Left ventricle myocardium inferior (tissue), 1 donor: ENCODE measurements at regions of chr1 and their contacts with region 1.

Region 1: DNA sequence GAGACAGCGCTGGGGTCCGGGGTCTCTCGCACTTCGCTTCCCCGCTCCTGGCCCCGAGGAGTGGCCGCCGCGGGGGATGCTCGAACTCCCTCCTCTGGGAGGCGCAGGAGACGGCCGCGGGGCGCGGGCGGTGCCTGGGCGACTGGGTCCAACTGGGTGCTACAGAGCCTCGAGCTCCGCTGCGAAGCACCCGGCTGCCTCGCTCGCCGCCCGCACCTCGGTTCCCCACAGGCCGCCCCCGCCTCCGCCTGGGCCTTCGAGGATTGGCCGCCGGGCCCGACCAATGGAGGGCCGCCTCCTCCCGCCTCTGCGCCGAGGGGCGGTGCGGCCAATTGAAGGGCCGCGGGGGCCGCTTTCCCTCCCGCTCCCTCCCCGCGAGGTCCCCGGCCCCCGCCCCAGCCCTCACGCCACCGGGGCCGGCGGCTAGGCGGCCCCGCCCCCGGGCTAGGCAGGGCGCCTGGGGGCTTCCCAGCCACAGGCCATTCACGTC is at the start of gene CNN3:
- DNase-seq: peak; percentile 93
- H3K4me3 ChIP-seq: peak within 1 kb of the TSS; percentile 80
- H3K27ac ChIP-seq: peak within 1 kb of the TSS; percentile 95
- H3K4me1 ChIP-seq: peaks cover 79% of the 10 kb centered on the region
- H3K27me3 ChIP-seq: no peaks in the 10 kb centered on the region
- CTCF ChIP-seq: no peak
- total RNA-seq, gene CNN3: 67.9 TPM

Region 2: GRCh38 chr1:94854458-94855306 is 72.3 kb before region 1 on chr1:
- intact Hi-C with region 1: no loop called
- DNase-seq: peak; percentile 84
- H3K4me3 ChIP-seq: peak overlapping the region; percentile 63
- H3K27ac ChIP-seq: peak overlapping the region; percentile 74
- H3K4me1 ChIP-seq: peaks cover 36% of the 10 kb centered on the region
- H3K27me3 ChIP-seq: no peaks in the 10 kb centered on the region
- CTCF ChIP-seq: peak; percentile 95

Region 3: GRCh38 chr1:95035536-95035935 is 108.6 kb after region 1 on chr1:
- intact Hi-C with region 1: loop called (anchors 10 kb)
- DNase-seq: no peak
- H3K4me3 ChIP-seq: no peak overlapping the region
- H3K27ac ChIP-seq: no peak overlapping the region
- H3K4me1 ChIP-seq: no peaks in the 10 kb centered on the region
- H3K27me3 ChIP-seq: no peaks in the 10 kb centered on the region
- CTCF ChIP-seq: no peak